Caco-2 (cell line): ENCODE measurements at regions of chr7 and their contacts with region 1.

Region 1: DNA sequence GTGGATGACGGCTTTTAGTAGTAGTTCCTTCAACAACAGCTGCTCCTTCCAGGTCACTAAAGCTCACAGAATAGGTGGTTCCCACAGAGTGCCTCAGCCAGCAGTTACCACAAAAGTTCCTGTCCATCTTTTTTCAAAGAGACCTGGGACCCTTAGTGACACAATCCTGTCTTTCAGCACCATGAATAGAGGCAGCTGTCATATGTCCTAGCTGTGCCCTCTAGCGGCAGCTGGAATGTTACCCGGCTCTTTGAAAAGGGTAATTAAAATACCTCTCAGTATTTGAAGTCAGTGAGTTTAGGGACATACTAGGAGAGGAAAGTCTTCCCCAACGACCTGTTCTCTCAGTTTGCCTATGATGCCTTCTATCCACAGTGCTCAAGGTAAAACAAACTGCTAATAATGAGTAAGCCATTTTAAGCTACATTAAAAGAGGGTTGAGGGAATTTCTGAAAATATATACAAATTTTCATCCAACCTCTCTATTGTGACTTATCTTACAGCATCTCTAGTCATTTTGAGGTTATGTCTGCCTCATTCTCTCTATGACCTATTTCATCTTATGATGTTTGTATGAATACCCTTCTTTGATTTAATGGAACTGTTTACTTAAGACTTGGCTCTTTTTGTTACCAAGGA is 290.8 kb downstream of the NXPH1 start:
- DNase-seq: peak; percentile 72 to 76
- H3K4me3 ChIP-seq: no peak overlapping the region
- H3K4me3 Mint-ChIP-seq: no peak overlapping the region
- H3K27ac Mint-ChIP-seq: no peak overlapping the region
- H3K4me1 ChIP-seq: no peaks in the 10 kb centered on the region
- H3K4me1 Mint-ChIP-seq: peaks cover 8% of the 10 kb centered on the region
- H3K27me3 ChIP-seq: no peaks in the 10 kb centered on the region
- H3K27me3 Mint-ChIP-seq: no peaks in the 10 kb centered on the region
- CTCF ChIP-seq: peak; percentile 83 to 90

Region 2: DNA sequence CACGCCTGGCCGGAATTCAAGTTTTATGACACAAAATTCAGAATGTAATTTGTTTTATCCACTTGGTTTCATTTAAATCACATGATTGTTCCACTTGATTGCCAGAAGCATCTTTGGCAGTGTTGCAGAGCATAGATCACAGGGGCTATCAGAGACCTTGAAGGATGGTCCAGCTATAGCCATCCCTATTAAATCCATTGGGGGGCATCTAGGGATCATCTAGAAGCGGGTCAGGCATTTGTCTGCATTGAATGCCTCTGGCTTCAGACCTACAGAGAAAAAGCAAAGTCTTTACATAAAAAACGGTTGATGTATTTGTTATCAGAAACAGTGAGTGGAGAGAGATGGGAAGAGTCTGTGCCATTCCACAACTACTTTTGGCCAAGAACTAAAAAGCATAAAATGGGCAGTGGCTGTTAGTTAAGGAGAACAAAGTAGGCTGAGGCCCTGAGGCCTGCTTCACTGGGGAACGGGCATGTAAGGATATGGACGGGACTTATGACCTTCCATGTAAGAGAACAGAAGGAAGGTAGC is 144.5 kb before region 1 on chr7:
- CTCF ChIA-PET with region 1: interaction called, 3 read pairs
- POLR2A ChIA-PET with region 1: no interaction called
- intact Hi-C with region 1: loop called (anchors 2 kb)
- DNase-seq: no peak
- H3K4me3 ChIP-seq: no peak overlapping the region
- H3K4me3 Mint-ChIP-seq: no peak overlapping the region
- H3K27ac Mint-ChIP-seq: no peak overlapping the region
- H3K4me1 ChIP-seq: no peaks in the 10 kb centered on the region
- H3K4me1 Mint-ChIP-seq: no peaks in the 10 kb centered on the region
- H3K27me3 ChIP-seq: no peaks in the 10 kb centered on the region
- H3K27me3 Mint-ChIP-seq: no peaks in the 10 kb centered on the region
- CTCF ChIP-seq: no peak

Region 3: GRCh38 chr7:8618441-8619070 is 105.6 kb before region 1 on chr7:
- CTCF ChIA-PET with region 1: no interaction called
- POLR2A ChIA-PET with region 1: no interaction called
- intact Hi-C with region 1: loop called (anchors 2 kb)
- DNase-seq: no peak
- H3K4me3 ChIP-seq: no peak overlapping the region
- H3K4me3 Mint-ChIP-seq: no peak overlapping the region
- H3K27ac Mint-ChIP-seq: peak overlapping the region; percentile 49
- H3K4me1 ChIP-seq: peaks cover 20% of the 10 kb centered on the region
- H3K4me1 Mint-ChIP-seq: no peaks in the 10 kb centered on the region
- H3K27me3 ChIP-seq: no peaks in the 10 kb centered on the region
- H3K27me3 Mint-ChIP-seq: no peaks in the 10 kb centered on the region
- CTCF ChIP-seq: no peak